ENCODE measurements at regions of chr15 and their contacts with region 1.

Region 1: DNA sequence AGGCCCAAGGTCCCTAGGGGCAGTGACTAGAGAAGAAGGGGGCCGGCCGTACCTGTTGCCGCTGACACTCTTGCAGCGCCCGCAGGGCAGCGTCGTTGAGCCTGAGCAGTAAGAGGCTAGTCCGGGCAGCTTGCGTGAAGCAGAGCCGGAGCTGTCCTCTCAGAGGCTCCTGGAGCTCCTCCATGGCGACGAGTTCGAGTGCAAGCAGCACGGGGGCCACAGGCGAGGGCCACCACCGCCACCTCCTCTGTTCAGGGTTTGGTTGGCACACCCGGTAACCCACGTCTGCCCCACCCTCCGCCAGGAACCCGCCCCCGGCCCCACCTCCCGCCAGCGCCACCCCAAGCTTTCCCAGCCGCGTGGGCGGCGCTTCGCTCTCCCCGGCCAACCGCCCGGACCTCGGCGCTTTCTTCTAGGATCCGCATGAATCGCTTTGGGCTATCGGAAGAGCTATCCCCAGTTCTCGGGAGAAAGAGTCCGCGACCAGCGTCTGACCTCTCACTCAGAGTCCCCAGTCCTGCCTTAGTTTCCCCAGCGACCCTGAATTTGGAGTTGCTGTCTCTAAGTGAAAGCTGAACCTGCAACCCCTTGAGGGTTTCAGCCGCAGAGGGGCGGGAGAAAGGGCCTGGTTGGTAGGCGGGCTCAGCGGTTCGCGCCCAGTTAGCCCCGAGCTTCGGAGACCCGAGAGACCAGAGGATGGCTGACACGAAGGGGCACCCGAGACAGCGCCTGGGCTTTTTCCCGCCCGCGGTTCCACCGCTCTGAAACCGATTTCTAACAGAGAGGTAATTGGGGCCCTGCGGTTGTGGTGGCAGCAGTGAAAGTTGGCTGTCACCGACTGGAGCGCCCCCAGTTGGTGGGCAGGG is at the start of gene ELL3:
- DNase-seq: peak; percentile 78
- ATAC-seq: peak; percentile 86
- H3K4me3 ChIP-seq: peak within 1 kb of the TSS; percentile 78
- H3K27ac ChIP-seq: peak within 1 kb of the TSS; percentile 91
- H3K4me1 ChIP-seq: peaks cover 16% of the 10 kb centered on the region
- H3K27me3 ChIP-seq: no peaks in the 10 kb centered on the region
- CTCF ChIP-seq: peak; percentile 74 to 78 (median 75)
- EP300 ChIP-seq: no peak; a peak in 1 of 4 replicates
- POLR2A ChIP-seq: peak; percentile 70
- RAD21 ChIP-seq: peak; percentile 31; the same call in 1 of the 2 replicates
- polyA plus RNA-seq, gene ELL3: 19.6 to 26.4 TPM

Region 2: DNA sequence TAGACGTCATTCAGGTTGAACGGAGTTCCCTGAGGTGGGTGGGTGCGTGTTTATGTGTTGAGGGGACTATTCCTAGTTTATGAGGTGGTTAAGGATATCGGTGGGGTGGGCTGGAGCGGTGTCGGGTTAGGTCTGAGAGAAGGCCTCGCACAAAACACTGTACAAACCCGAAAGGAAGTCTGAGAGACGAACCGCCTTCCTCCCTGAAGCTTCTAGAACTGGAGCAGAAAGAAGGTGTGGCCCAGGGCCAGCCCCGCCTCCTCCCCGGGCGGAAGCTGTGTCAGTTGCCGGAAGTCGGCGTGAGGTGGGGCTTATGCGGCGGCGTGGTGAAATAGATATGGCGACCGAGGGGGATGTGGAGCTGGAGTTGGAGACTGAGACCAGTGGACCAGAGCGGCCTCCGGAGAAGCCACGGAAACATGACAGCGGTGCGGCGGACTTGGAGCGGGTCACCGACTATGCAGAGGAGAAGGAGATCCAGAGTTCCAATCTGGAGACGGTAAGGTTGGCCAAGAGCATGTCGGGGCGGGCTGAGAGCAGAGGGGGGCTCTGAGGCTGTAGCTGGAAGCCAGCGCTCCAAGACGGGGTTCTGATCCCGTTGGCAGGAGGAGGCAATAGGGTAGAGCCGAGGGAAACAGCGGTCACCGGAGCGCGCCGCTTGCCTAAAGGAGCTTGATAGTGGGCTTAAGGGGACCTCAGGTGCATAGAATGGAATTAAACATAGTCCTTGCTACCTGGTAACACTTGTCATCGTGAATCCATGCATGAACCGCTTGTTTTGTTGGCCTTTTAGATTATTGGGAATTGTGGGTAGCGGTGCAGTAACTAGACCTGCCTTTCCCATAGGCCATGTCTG is 23.6 kb after region 1 on chr15 and contains the start of gene HYPK:
- CTCF ChIA-PET with region 1: interaction called, 23 read pairs
- POLR2A ChIA-PET with region 1: interaction called, 21 read pairs
- RAD21 ChIA-PET with region 1: interaction called, 19 read pairs
- SMC1A ChIA-PET with region 1: interaction called, 129 read pairs
- in situ Hi-C with region 1: no loop called
- intact Hi-C with region 1: no loop called
- DNase-seq: peak; percentile 55
- ATAC-seq: peak; percentile 93
- H3K4me3 ChIP-seq: peak within 1 kb of the TSS; percentile 78
- H3K27ac ChIP-seq: peak within 1 kb of the TSS; percentile 75
- H3K4me1 ChIP-seq: peaks cover 24% of the 10 kb centered on the region
- H3K27me3 ChIP-seq: no peaks in the 10 kb centered on the region
- CTCF ChIP-seq: no peak
- EP300 ChIP-seq: peak in 1 of 2 experiments; percentile 35; a peak in 2 of 4 replicates
- POLR2A ChIP-seq: peak; percentile 90
- RAD21 ChIP-seq: no peak
- polyA plus RNA-seq, gene HYPK: 8.6 to 11.0 TPM

Region 3: GRCh38 chr15:43808960-43809678 is 32.2 kb after region 1 on chr15:
- CTCF ChIA-PET with region 1: interaction called, 11 read pairs
- POLR2A ChIA-PET with region 1: interaction called, 19 read pairs
- RAD21 ChIA-PET with region 1: interaction called, 23 read pairs
- SMC1A ChIA-PET with region 1: interaction called, 17 read pairs
- in situ Hi-C with region 1: no loop called
- intact Hi-C with region 1: loop called (anchors 2 kb)
- DNase-seq: no peak
- ATAC-seq: peak; percentile 94
- H3K4me3 ChIP-seq: peak overlapping the region; percentile 19; the same call in 1 of the 2 replicates
- H3K27ac ChIP-seq: peak overlapping the region; percentile 59
- H3K4me1 ChIP-seq: peaks cover 26% of the 10 kb centered on the region
- H3K27me3 ChIP-seq: no peaks in the 10 kb centered on the region
- CTCF ChIP-seq: no peak
- EP300 ChIP-seq: peak; percentile 85 to 94; a peak in 3 of 4 replicates
- POLR2A ChIP-seq: no peak
- RAD21 ChIP-seq: no peak

Region 4: GRCh38 chr15:43886558-43886957 is 109.6 kb after region 1 on chr15:
- CTCF ChIA-PET with region 1: no interaction called
- POLR2A ChIA-PET with region 1: no interaction called
- RAD21 ChIA-PET with region 1: no interaction called
- SMC1A ChIA-PET with region 1: no interaction called
- in situ Hi-C with region 1: no loop called
- intact Hi-C with region 1: no loop called
- DNase-seq: no peak
- ATAC-seq: no peak
- H3K4me3 ChIP-seq: no peak overlapping the region
- H3K27ac ChIP-seq: no peak overlapping the region
- H3K4me1 ChIP-seq: no peaks in the 10 kb centered on the region
- H3K27me3 ChIP-seq: no peaks in the 10 kb centered on the region
- CTCF ChIP-seq: no peak
- EP300 ChIP-seq: no peak
- POLR2A ChIP-seq: no peak
- RAD21 ChIP-seq: no peak

Measured in GM12878 (cell line).